Common myeloid progenitor, CD34-positive (primary cell): ENCODE measurements at regions of chr2 and their contacts with region 1.

Region 1: DNA sequence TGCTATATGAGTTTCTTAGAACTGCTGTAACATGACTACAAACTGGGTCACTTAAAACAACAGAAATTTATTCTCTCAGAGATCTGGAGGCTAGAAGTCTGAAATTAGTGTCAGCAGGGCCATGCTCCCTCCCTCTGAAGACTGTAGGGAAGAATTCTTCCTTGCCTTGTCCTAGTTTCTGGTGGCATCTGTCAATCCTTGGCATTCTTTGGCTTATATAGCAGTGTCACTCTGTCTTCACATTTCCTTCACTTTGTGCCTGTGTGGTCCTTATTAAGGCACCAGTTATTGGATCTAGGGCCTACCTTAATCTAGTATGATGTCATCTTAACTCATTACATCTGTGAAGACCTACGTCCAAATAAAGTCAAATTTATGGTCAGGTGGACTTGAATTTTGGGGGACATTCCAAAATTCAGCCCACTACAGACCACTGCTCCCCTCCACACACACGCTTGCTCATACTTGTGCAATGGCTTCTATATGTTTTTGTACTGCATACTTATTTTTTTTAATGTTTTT is 7.6 kb downstream of the ZC3H15 start:
- DNase-seq: no peak
- H3K4me3 ChIP-seq: no peak overlapping the region
- H3K27ac ChIP-seq: no peak overlapping the region
- H3K4me1 ChIP-seq: peaks cover 0 to 22% (median 7%) of the 10 kb centered on the region in 4 experiments
- H3K27me3 ChIP-seq: no peaks in the 10 kb centered on the region

Region 2: GRCh38 chr2:186503848-186504606 is 10.4 kb after region 1 on chr2:
- CTCF ChIA-PET with region 1: interaction called, 11 read pairs
- POLR2A ChIA-PET with region 1: no interaction called
- DNase-seq: peak; percentile 30 to 62 (median 56)
- H3K4me3 ChIP-seq: no peak overlapping the region
- H3K27ac ChIP-seq: no peak overlapping the region
- H3K4me1 ChIP-seq: no peaks in the 10 kb centered on the region
- H3K27me3 ChIP-seq: no peaks in the 10 kb centered on the region